B cell (primary cell): ENCODE measurements at regions of chr1 and their contacts with region 1.

Region 1: GRCh38 chr1:151399890-151400495 is 620 bp downstream of the PSMB4 start:
- DNase-seq: no peak
- ATAC-seq: peak; percentile 7
- H3K4me3 ChIP-seq: peak overlapping the region; percentile 91 to 97 (median 92)
- H3K4me3 Mint-ChIP-seq: peak overlapping the region; percentile 93
- H3K27ac ChIP-seq: peak overlapping the region; percentile 88 to 95
- H3K27ac Mint-ChIP-seq: peak overlapping the region; percentile 95
- H3K4me1 ChIP-seq: peaks cover 8 to 21% of the 10 kb centered on the region in 2 donors
- H3K4me1 Mint-ChIP-seq: peaks cover 26% of the 10 kb centered on the region
- H3K27me3 ChIP-seq: no peaks in the 10 kb centered on the region
- H3K27me3 Mint-ChIP-seq: no peaks in the 10 kb centered on the region
- CTCF ChIP-seq: no peak

Region 2: DNA sequence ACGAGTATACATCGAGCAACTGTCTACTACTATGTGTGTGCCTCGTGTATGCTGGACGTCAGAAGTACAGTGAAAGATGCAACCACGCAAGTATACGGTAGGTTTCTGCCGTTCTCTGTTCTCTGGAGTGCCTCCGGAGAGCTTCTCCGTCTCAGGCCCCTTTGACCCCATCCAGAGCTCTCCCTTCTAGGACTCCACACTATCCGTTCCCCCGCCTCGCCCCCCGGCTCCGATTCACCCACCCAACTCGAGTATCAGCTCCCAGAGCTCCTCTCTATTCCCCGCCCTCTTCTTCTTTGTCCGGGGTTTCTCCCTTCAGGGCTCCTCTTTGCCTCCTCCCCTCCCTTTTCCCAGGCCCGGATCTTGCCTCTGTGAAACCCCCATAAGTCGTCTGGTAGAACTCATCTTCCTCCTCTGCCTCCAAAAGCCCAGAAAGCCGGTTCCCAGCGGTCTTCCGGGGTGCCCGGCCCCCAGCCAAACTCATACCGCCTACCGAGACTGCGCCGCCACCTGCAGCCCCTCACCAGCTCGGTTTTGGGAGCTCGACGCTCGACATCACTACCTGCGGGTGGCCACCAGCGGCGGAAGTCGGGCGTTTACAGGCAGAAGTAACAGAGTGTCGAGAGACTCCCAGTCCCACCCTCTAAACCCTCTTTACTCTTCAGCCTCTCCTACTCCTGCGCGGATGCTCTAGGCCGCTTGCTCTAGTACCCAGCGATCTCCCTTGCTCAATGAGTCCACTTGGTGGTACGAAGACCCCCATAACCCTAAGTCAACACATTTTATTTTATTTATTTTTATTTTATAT is 210.2 kb before region 1 on chr1 and contains the start of gene VPS72:
- CTCF ChIA-PET with region 1: interaction called, 3 read pairs
- POLR2A ChIA-PET with region 1: no interaction called
- intact Hi-C with region 1: loop called (anchors 1 kb)
- DNase-seq: peak; percentile 91
- ATAC-seq: peak; percentile 91
- H3K4me3 ChIP-seq: peak within 1 kb of the TSS; percentile 55 to 92 (median 86)
- H3K4me3 Mint-ChIP-seq: peak within 1 kb of the TSS; percentile 96
- H3K27ac ChIP-seq: peak within 1 kb of the TSS; percentile 75 to 91
- H3K27ac Mint-ChIP-seq: peak within 1 kb of the TSS; percentile 95
- H3K4me1 ChIP-seq: peaks cover 13 to 22% of the 10 kb centered on the region in 2 donors
- H3K4me1 Mint-ChIP-seq: peaks cover 26% of the 10 kb centered on the region
- H3K27me3 ChIP-seq: no peaks in the 10 kb centered on the region
- H3K27me3 Mint-ChIP-seq: no peaks in the 10 kb centered on the region
- CTCF ChIP-seq: no peak
- total RNA-seq, gene VPS72: 48.7 and 71.3 TPM in 2 replicates

Region 3: GRCh38 chr1:151254217-151255213 is 145.5 kb before region 1 on chr1 and contains the start of gene PSMD4:
- CTCF ChIA-PET with region 1: no interaction called
- POLR2A ChIA-PET with region 1: no interaction called
- intact Hi-C with region 1: loop called (anchors 1 kb)
- DNase-seq: peak; percentile 96
- ATAC-seq: peak; percentile 93
- H3K4me3 ChIP-seq: peak within 1 kb of the TSS; percentile 82 to 97 (median 84)
- H3K4me3 Mint-ChIP-seq: peak within 1 kb of the TSS; percentile 97
- H3K27ac ChIP-seq: peak within 1 kb of the TSS; percentile 66 to 85
- H3K27ac Mint-ChIP-seq: peak within 1 kb of the TSS; percentile 97
- H3K4me1 ChIP-seq: peaks cover 9 to 12% of the 10 kb centered on the region in 2 donors
- H3K4me1 Mint-ChIP-seq: peaks cover 30% of the 10 kb centered on the region
- H3K27me3 ChIP-seq: no peaks in the 10 kb centered on the region
- H3K27me3 Mint-ChIP-seq: no peaks in the 10 kb centered on the region
- CTCF ChIP-seq: no peak
- total RNA-seq, gene PSMD4: 142 and 169 TPM in 2 replicates

Region 4: GRCh38 chr1:151340870-151341754 is 58.9 kb before region 1 on chr1:
- CTCF ChIA-PET with region 1: interaction called, 28 read pairs
- POLR2A ChIA-PET with region 1: no interaction called
- intact Hi-C with region 1: no loop called
- DNase-seq: peak; percentile 82
- ATAC-seq: peak; percentile 83
- H3K4me3 ChIP-seq: no peak overlapping the region
- H3K4me3 Mint-ChIP-seq: no peak overlapping the region
- H3K27ac ChIP-seq: peak overlapping the region; percentile 21 to 99
- H3K27ac Mint-ChIP-seq: peak overlapping the region; percentile 69
- H3K4me1 ChIP-seq: peaks cover 25% of the 10 kb centered on the region in 2 donors
- H3K4me1 Mint-ChIP-seq: peaks cover 38% of the 10 kb centered on the region
- H3K27me3 ChIP-seq: no peaks in the 10 kb centered on the region
- H3K27me3 Mint-ChIP-seq: no peaks in the 10 kb centered on the region
- CTCF ChIP-seq: peak; percentile 85

Region 5: DNA sequence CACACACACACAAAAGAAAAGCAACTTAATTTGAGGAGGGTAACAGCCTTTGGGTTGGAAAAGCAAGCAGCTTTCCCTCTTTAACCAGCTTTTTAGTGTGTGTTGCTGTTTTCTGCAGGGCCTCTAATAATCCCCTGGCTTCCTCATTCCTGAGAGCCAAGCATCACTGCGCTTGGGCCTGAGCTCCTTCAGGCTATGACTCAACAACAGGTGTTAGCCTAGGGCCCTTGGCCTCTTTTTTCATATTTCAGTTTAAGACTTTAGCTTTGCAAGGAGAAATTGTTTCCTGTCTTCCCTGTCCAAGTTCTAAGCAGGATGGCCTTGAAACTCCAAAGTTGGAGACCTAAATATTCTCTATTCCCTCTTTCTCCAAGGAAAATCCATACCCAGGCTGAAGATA is 185.6 kb after region 1 on chr1:
- CTCF ChIA-PET with region 1: no interaction called
- POLR2A ChIA-PET with region 1: no interaction called
- intact Hi-C with region 1: no loop called
- DNase-seq: no peak
- ATAC-seq: no peak
- H3K4me3 ChIP-seq: no peak overlapping the region
- H3K4me3 Mint-ChIP-seq: no peak overlapping the region
- H3K27ac ChIP-seq: no peak overlapping the region
- H3K27ac Mint-ChIP-seq: no peak overlapping the region
- H3K4me1 ChIP-seq: no peaks in the 10 kb centered on the region
- H3K4me1 Mint-ChIP-seq: no peaks in the 10 kb centered on the region
- H3K27me3 ChIP-seq: no peaks in the 10 kb centered on the region
- H3K27me3 Mint-ChIP-seq: peaks cover 9% of the 10 kb centered on the region
- CTCF ChIP-seq: no peak

Region 6: GRCh38 chr1:151611832-151612500 is 212.0 kb after region 1 on chr1 and contains the start of gene SNX27:
- CTCF ChIA-PET with region 1: no interaction called
- POLR2A ChIA-PET with region 1: no interaction called
- intact Hi-C with region 1: loop called (anchors 5 kb)
- DNase-seq: peak; percentile 94
- ATAC-seq: peak; percentile 96
- H3K4me3 ChIP-seq: peak within 1 kb of the TSS; percentile 52 to 94 (median 84)
- H3K4me3 Mint-ChIP-seq: peak within 1 kb of the TSS; percentile 91
- H3K27ac ChIP-seq: peak within 1 kb of the TSS in 1 of 2 donors; percentile 79
- H3K27ac Mint-ChIP-seq: peak within 1 kb of the TSS; percentile 94
- H3K4me1 ChIP-seq: peaks cover 11 to 18% of the 10 kb centered on the region in 2 donors
- H3K4me1 Mint-ChIP-seq: peaks cover 32% of the 10 kb centered on the region
- H3K27me3 ChIP-seq: peaks cover 0 to 3% (median 1%) of the 10 kb centered on the region in 4 experiments
- H3K27me3 Mint-ChIP-seq: peaks cover 5% of the 10 kb centered on the region
- CTCF ChIP-seq: no peak
- total RNA-seq, gene SNX27: 43.2 and 45.6 TPM in 2 replicates